ENCODE measurements at regions of chr9 and their contacts with region 1.

Region 1: GRCh38 chr9:121802753-121803152 is 151.3 kb downstream of the DAB2IP start:
- DNase-seq: no peak
- H3K4me3 ChIP-seq: no peak overlapping the region
- H3K4me3 Mint-ChIP-seq: no peak overlapping the region
- H3K27ac Mint-ChIP-seq: no peak overlapping the region
- H3K4me1 ChIP-seq: no peaks in the 10 kb centered on the region
- H3K4me1 Mint-ChIP-seq: no peaks in the 10 kb centered on the region
- H3K27me3 ChIP-seq: no peaks in the 10 kb centered on the region; the same call in 1 of the 2 replicates
- H3K27me3 Mint-ChIP-seq: peaks cover 9% of the 10 kb centered on the region
- CTCF ChIP-seq: no peak

Region 2: GRCh38 chr9:121744002-121744686 is 58.6 kb before region 1 on chr9:
- CTCF ChIA-PET with region 1: no interaction called
- POLR2A ChIA-PET with region 1: no interaction called
- intact Hi-C with region 1: no loop called
- DNase-seq: peak; percentile 71 to 76
- H3K4me3 ChIP-seq: peak overlapping the region; percentile 32
- H3K4me3 Mint-ChIP-seq: no peak overlapping the region
- H3K27ac Mint-ChIP-seq: no peak overlapping the region
- H3K4me1 ChIP-seq: peaks cover 26% of the 10 kb centered on the region
- H3K4me1 Mint-ChIP-seq: peaks cover 5% of the 10 kb centered on the region
- H3K27me3 ChIP-seq: no peaks in the 10 kb centered on the region
- H3K27me3 Mint-ChIP-seq: no peaks in the 10 kb centered on the region
- CTCF ChIP-seq: peak; percentile 57 to 81

Region 3: GRCh38 chr9:121819428-121820231 is 16.9 kb after region 1 on chr9:
- CTCF ChIA-PET with region 1: no interaction called
- POLR2A ChIA-PET with region 1: no interaction called
- intact Hi-C with region 1: no loop called
- DNase-seq: no peak
- H3K4me3 ChIP-seq: no peak overlapping the region
- H3K4me3 Mint-ChIP-seq: no peak overlapping the region
- H3K27ac Mint-ChIP-seq: no peak overlapping the region
- H3K4me1 ChIP-seq: peaks cover 2% of the 10 kb centered on the region; the same call in 1 of the 2 replicates
- H3K4me1 Mint-ChIP-seq: no peaks in the 10 kb centered on the region
- H3K27me3 ChIP-seq: no peaks in the 10 kb centered on the region; the same call in 1 of the 2 replicates
- H3K27me3 Mint-ChIP-seq: no peaks in the 10 kb centered on the region
- CTCF ChIP-seq: no peak

Region 4: DNA sequence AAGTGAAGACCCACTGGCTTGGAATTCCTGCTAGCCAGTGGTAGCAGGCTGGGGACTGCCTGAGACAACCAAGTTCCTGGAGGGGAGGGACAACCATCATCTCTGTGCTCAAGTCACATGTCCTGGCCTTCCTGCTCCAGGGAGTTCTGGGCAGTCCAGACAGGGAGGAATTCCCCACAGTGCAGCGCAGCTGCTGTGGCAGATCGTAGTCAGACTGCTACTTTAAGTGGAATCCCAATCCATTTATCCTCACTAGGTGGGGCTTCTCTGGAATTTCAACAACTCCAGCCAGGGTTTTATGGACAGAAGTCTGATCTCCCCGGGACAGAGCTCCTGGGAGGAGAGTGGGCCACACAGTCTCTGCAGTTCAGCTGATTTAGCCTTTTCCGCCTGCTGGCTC is 965.1 kb after region 1 on chr9:
- CTCF ChIA-PET with region 1: no interaction called
- POLR2A ChIA-PET with region 1: no interaction called
- intact Hi-C with region 1: loop called (anchors 5 kb)
- DNase-seq: no peak
- H3K4me3 ChIP-seq: no peak overlapping the region
- H3K4me3 Mint-ChIP-seq: no peak overlapping the region
- H3K27ac Mint-ChIP-seq: no peak overlapping the region
- H3K4me1 ChIP-seq: no peaks in the 10 kb centered on the region
- H3K4me1 Mint-ChIP-seq: no peaks in the 10 kb centered on the region
- H3K27me3 ChIP-seq: no peaks in the 10 kb centered on the region
- H3K27me3 Mint-ChIP-seq: peaks cover under 1% of the 10 kb centered on the region
- CTCF ChIP-seq: no peak

Measured in Caco-2 (cell line).